ACHN (cell line): ENCODE measurements at regions of chr12 and their contacts with region 1.

Region 1: GRCh38 chr12:100356644-100357223 is at the start of gene SLC17A8:
- DNase-seq: no peak

Region 2: GRCh38 chr12:100324498-100324897 is 32.2 kb before region 1 on chr12:
- in situ Hi-C with region 1: no loop called
- DNase-seq: no peak

Region 3: GRCh38 chr12:100539202-100539601 is 182.5 kb after region 1 on chr12:
- in situ Hi-C with region 1: loop called (anchors 25 kb)
- DNase-seq: peak; percentile 78